Mammary epithelial cell (primary cell): ENCODE measurements at regions of chr5 and their contacts with region 1.

Region 1: DNA sequence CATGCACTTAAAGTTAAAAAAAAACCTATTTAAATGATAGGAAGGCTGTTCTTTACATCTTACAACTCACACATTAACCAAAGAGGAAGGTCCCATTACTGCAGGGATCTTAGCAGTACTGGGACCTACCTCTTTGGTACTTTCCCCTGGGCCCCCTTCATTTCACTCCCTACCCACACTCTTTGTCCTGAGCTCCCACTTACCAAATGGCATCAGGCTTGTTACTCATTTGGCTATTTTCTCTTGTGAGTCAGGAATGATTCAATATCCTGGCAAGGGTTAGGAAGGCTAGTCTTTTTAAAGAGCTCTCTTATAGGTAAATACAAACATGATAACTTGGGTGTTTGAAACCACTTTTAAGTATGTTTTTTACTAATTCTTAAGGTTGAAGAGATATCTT is 117.4 kb upstream of the ELL2 start:
- DNase-seq: peak; percentile 97
- H3K4me3 ChIP-seq: no peak overlapping the region
- H3K27ac ChIP-seq: peak overlapping the region; percentile 97
- H3K4me1 ChIP-seq: peaks cover 67% of the 10 kb centered on the region
- H3K27me3 ChIP-seq: no peaks in the 10 kb centered on the region
- CTCF ChIP-seq: no peak

Region 2: DNA sequence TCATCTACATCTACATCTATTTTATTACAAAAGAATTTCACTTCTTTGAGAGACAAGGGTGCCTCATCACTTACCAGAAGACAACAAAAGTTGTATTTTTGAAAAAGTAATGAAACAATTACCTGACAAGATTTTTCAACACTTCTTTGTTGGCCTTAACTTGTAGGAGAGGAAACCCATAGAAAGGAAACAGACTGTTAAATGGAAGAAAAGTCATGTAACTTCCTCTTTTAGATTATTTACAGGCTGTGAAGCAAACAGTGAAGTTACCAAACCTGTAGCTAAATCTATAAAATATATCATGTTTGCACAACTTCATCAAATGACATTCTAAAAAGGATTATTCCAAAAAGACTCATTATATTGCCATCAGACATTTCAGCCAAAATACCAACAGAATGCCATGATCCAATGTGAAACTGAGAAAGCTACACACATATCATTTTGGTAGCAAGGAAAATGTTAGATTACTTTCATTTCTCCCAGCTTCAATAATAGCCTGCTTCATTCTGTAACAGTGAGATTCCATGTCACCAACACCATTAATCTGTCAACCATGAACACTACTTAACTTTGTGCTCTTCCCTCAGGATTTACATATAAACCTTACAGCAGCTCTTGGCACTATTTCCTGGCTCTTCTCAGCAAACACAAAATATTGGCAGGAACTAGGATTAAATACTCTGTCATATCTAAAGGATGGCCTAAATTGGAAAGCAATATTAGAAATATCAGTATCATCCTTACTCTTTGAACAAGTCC is 916.7 kb before region 1 on chr5:
- CTCF ChIA-PET with region 1: no interaction called
- dilution Hi-C with region 1: no loop called
- in situ Hi-C with region 1: no loop called
- intact Hi-C with region 1: no loop called
- DNase-seq: no peak
- H3K4me3 ChIP-seq: no peak overlapping the region
- H3K27ac ChIP-seq: no peak overlapping the region
- H3K4me1 ChIP-seq: no peaks in the 10 kb centered on the region
- H3K27me3 ChIP-seq: peaks cover 2% of the 10 kb centered on the region
- CTCF ChIP-seq: no peak

Region 3: GRCh38 chr5:96026406-96027041 is 52.6 kb before region 1 on chr5:
- CTCF ChIA-PET with region 1: no interaction called
- dilution Hi-C with region 1: loop called (anchors 5 kb)
- in situ Hi-C with region 1: no loop called
- intact Hi-C with region 1: loop called (anchors 2 kb)
- DNase-seq: peak; percentile 91
- H3K4me3 ChIP-seq: peak overlapping the region in 1 of 3 experiments; percentile 25
- H3K27ac ChIP-seq: peak overlapping the region; percentile 92
- H3K4me1 ChIP-seq: peaks cover 59% of the 10 kb centered on the region
- H3K27me3 ChIP-seq: no peaks in the 10 kb centered on the region
- CTCF ChIP-seq: no peak

Region 4: GRCh38 chr5:96031811-96032261 is 47.2 kb before region 1 on chr5:
- CTCF ChIA-PET with region 1: no interaction called
- dilution Hi-C with region 1: loop called (anchors 5 kb)
- in situ Hi-C with region 1: no loop called
- intact Hi-C with region 1: loop called (anchors 2 kb)
- DNase-seq: peak; percentile 93
- H3K4me3 ChIP-seq: no peak overlapping the region
- H3K27ac ChIP-seq: peak overlapping the region; percentile 84
- H3K4me1 ChIP-seq: peaks cover 43% of the 10 kb centered on the region
- H3K27me3 ChIP-seq: no peaks in the 10 kb centered on the region
- CTCF ChIP-seq: no peak

Region 5: DNA sequence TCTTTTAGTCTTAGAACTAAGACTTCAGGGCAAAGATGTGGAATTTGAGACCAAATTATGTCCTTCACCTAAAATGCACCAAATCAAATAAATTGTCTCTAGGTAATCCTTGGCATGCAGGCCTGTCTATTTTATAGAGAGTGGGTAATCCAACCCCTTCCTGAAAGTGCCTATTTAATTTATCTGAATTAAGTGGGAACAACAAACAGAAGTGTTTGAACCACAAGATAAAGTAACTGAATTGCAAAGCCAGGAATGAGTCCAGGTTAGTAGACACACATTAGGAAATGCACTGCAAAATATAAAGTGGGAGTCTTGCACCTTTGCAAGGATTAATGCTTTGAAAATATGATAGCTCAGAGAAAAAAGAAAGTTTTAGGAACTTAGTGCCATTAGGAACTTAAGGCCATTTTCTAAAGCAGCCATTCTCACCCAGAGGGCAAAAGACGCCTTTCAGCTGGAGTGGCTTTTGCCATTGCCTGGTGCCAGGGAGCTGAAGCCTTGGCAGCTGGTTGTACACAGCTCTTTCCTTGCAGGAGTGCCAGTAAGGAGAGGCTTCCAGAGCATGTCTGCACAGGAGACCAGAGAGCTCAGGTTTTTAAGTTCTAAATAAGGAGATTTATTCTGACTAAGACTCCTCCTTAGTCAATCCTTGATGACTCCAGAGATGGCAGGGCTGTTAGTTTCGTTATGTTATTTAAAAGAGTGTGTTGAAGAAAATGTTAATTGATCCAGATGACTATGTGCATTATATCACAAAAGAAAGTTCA is 34.3 kb after region 1 on chr5:
- CTCF ChIA-PET with region 1: interaction called, 7 read pairs
- dilution Hi-C with region 1: no loop called
- in situ Hi-C with region 1: no loop called
- intact Hi-C with region 1: loop called (anchors 2 kb)
- DNase-seq: peak; percentile 89
- H3K4me3 ChIP-seq: peak overlapping the region in 2 of 3 experiments; percentile 8
- H3K27ac ChIP-seq: peak overlapping the region; percentile 88
- H3K4me1 ChIP-seq: peaks cover 47% of the 10 kb centered on the region
- H3K27me3 ChIP-seq: no peaks in the 10 kb centered on the region
- CTCF ChIP-seq: no peak

Region 6: DNA sequence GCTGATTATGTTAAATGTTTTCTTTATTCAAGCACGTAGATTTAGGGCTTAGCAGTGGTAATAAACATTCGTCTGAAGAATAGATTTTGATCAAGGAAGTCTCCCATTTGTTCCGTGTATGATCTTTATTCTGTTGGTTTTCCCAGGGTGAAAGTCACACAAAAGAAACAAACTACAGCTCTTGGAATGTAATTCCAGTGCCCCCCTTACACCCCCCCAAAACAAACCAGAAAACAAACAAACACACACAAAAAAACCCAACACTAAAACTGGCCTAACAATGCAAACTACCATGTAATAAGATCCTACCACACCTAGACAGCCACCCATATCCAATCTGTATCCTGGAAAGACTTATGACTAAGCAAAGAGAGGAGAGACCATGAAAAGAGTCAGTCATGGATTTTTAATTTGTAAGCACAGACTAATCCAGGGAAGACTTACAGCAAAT is 78.8 kb after region 1 on chr5:
- CTCF ChIA-PET with region 1: no interaction called
- dilution Hi-C with region 1: no loop called
- in situ Hi-C with region 1: no loop called
- intact Hi-C with region 1: loop called (anchors 5 kb)
- DNase-seq: peak; percentile 58
- H3K4me3 ChIP-seq: no peak overlapping the region
- H3K27ac ChIP-seq: peak overlapping the region; percentile 90
- H3K4me1 ChIP-seq: peaks cover 35% of the 10 kb centered on the region
- H3K27me3 ChIP-seq: no peaks in the 10 kb centered on the region
- CTCF ChIP-seq: no peak

Region 7: GRCh38 chr5:96177303-96177869 is 98.3 kb after region 1 on chr5:
- CTCF ChIA-PET with region 1: no interaction called
- dilution Hi-C with region 1: loop called (anchors 5 kb)
- in situ Hi-C with region 1: no loop called
- intact Hi-C with region 1: no loop called
- DNase-seq: peak; percentile 99
- H3K4me3 ChIP-seq: no peak overlapping the region
- H3K27ac ChIP-seq: peak overlapping the region; percentile 50
- H3K4me1 ChIP-seq: peaks cover 40% of the 10 kb centered on the region
- H3K27me3 ChIP-seq: no peaks in the 10 kb centered on the region
- CTCF ChIP-seq: no peak

Region 8: DNA sequence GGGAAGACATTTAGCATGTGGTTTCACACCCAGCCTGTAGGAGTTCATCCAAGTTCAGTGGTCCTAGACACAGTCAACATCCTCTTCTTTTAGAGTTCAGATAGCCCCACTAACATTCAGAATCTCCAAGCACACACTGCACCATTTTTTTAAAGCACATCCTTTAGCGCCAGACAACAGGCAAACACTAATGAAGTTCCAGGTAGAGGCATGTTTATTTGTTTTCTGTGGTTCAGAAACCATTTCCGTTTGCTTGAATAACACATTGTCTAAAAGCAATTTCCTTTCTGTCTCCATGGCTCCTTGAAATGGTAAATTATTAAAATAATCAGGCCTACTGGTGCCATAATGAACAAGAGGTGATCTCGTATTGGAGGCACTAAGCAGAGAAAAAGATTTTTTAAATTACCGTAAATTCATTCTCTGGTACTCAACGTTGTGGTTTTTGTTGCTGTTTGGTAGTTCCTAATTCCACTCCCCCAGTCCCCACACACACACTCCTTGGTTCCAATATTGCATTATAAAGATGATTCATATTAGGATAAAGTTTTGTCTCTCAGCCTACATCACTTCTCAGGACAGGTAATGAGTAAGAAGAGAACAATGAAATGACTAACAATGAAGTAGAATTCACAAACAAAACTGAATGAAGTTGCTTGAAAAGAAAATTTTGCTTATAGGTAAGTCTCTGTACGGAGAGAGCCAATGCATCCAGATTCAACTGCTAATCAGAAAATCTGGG is 200.9 kb after region 1 on chr5:
- CTCF ChIA-PET with region 1: no interaction called
- dilution Hi-C with region 1: no loop called
- in situ Hi-C with region 1: no loop called
- intact Hi-C with region 1: loop called (anchors 5 kb)
- DNase-seq: peak; percentile 94
- H3K4me3 ChIP-seq: peak overlapping the region in 2 of 3 experiments; percentile 19 to 25
- H3K27ac ChIP-seq: peak overlapping the region; percentile 97
- H3K4me1 ChIP-seq: peaks cover 36% of the 10 kb centered on the region
- H3K27me3 ChIP-seq: no peaks in the 10 kb centered on the region
- CTCF ChIP-seq: peak in 1 of 2 donors; percentile 9

Region 9: GRCh38 chr5:96374653-96375052 is 295.6 kb after region 1 on chr5:
- CTCF ChIA-PET with region 1: no interaction called
- dilution Hi-C with region 1: no loop called
- in situ Hi-C with region 1: no loop called
- intact Hi-C with region 1: no loop called
- DNase-seq: no peak
- H3K4me3 ChIP-seq: no peak overlapping the region
- H3K27ac ChIP-seq: no peak overlapping the region
- H3K4me1 ChIP-seq: no peaks in the 10 kb centered on the region
- H3K27me3 ChIP-seq: peaks cover 2% of the 10 kb centered on the region
- CTCF ChIP-seq: no peak

Region 10: DNA sequence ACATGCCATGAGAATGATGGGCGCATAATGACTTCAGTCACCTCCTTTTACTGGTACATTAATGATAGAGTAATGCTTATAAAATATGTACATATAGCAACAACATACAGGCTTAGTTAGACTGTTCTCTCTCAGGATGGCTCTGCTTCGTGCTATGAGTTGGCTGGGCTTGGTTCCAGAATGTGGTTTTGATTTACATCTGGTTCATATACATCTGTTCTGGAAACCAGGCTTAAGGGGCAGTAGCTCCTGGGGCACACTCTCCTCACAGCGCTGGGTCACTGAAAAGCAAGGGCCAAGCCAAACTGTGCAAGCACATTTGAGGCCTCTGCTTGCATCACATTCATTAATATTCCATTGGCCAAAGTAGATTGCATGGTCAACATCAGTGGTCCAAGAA is 309.1 kb after region 1 on chr5:
- CTCF ChIA-PET with region 1: no interaction called
- dilution Hi-C with region 1: no loop called
- in situ Hi-C with region 1: no loop called
- intact Hi-C with region 1: no loop called
- DNase-seq: no peak
- H3K4me3 ChIP-seq: no peak overlapping the region
- H3K27ac ChIP-seq: no peak overlapping the region
- H3K4me1 ChIP-seq: peaks cover 20% of the 10 kb centered on the region
- H3K27me3 ChIP-seq: no peaks in the 10 kb centered on the region
- CTCF ChIP-seq: no peak